Gastrocnemius medialis (tissue), 4 donors: ENCODE measurements at regions of chr10 and their contacts with region 1.

Region 1: GRCh38 chr10:6401562-6402348 is 178.3 kb downstream of the PRKCQ start:
- DNase-seq: peak; percentile 68 to 78
- ATAC-seq: peak; percentile 95 to 96
- H3K4me3 ChIP-seq: peak overlapping the region; percentile 31 to 53 (median 49)
- H3K27ac ChIP-seq: peak overlapping the region; percentile 73 to 84 (median 76)
- H3K4me1 ChIP-seq: peaks cover 9 to 18% of the 10 kb centered on the region in 2 donors
- H3K27me3 ChIP-seq: no peaks in the 10 kb centered on the region
- CTCF ChIP-seq: peak; percentile 62 to 79 (median 76)
- POLR2A ChIP-seq: no peak

Region 2: GRCh38 chr10:6088721-6089390 is 312.9 kb before region 1 on chr10 and contains the start of gene RBM17:
- in situ Hi-C with region 1: no loop called
- intact Hi-C with region 1: loop called (anchors 1 kb)
- DNase-seq: peak; percentile 92 to 96
- ATAC-seq: peak; percentile 86 to 91
- H3K4me3 ChIP-seq: peak within 1 kb of the TSS; percentile 83 to 94 (median 88)
- H3K27ac ChIP-seq: peak within 1 kb of the TSS; percentile 78 to 96 (median 82)
- H3K4me1 ChIP-seq: peaks cover 39 to 48% of the 10 kb centered on the region in 2 donors
- H3K27me3 ChIP-seq: peaks cover 0 to 5% (median 0%) of the 10 kb centered on the region in 3 donors
- CTCF ChIP-seq: peak; percentile 99 to 100 (median 100)
- POLR2A ChIP-seq: peak; percentile 83 to 87
- total RNA-seq, gene RBM17: 53.2 to 67.4 (median 60.1) TPM

Region 3: GRCh38 chr10:6114805-6115341 is 286.9 kb before region 1 on chr10:
- in situ Hi-C with region 1: loop called in 1 of 4 experiments (anchors 5 kb)
- intact Hi-C with region 1: no loop called
- DNase-seq: peak in 1 of 2 donors; percentile 49
- ATAC-seq: peak; percentile 15 to 24
- H3K4me3 ChIP-seq: no peak overlapping the region
- H3K27ac ChIP-seq: peak overlapping the region; percentile 78 to 83 (median 80)
- H3K4me1 ChIP-seq: peaks cover 48 to 49% of the 10 kb centered on the region in 2 donors
- H3K27me3 ChIP-seq: no peaks in the 10 kb centered on the region
- CTCF ChIP-seq: no peak
- POLR2A ChIP-seq: no peak

Region 4: DNA sequence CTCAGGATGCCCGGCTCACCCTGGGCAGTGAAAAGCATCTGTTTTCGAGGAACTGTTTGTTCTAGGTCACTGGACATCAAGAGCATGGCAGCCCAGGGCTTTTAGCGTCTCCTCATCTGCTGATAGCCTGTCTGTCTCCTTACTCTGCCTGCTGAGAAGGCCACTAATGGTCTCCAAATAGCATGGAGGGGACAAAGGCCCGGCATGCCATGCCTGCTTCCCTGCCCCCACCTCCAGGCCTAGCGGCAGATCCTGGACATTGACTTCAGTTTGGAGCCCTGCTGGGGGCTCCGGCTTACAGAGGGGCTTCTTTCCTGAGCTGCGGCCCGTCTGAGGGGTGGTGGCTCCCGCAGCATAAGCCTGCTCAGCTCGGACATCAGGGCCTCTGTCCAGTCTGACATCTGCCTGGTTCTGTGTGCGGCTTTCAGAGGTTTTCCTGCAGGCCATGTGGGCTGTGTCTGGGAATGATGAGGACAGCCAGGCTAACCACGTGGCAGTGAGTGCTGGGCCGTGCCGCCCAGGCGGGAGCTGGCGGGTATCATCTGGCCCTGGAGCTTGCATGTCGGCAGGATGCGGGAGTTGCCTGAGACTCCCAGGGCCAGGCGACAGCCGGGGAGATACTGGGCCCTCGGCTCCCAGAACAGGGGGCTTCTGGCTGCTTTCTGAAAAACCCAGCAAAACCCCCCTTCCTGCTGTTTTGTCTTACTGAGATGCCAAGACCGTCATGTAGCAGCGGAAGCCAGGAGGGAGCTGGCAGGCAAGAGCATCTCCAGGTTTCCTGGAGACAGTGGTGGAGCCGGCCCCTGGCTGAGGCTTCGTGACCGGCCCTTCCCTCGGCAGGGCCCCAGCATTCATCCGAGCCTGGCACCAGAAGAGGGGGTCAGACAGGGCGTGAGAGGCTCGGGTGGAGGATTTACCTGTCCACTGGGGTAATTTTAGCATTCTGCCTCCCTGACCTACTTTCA is 189.8 kb before region 1 on chr10:
- in situ Hi-C with region 1: loop called in 1 of 4 experiments (anchors 10 kb)
- intact Hi-C with region 1: no loop called
- DNase-seq: peak; percentile 53 to 56
- ATAC-seq: peak; percentile 57 to 72
- H3K4me3 ChIP-seq: peak overlapping the region in 1 of 4 donors; percentile 23
- H3K27ac ChIP-seq: peak overlapping the region; percentile 72 to 88 (median 77)
- H3K4me1 ChIP-seq: peaks cover 7 to 60% of the 10 kb centered on the region in 2 donors
- H3K27me3 ChIP-seq: no peaks in the 10 kb centered on the region
- CTCF ChIP-seq: no peak
- POLR2A ChIP-seq: no peak

Region 5: GRCh38 chr10:6321880-6322279 is 79.9 kb before region 1 on chr10:
- in situ Hi-C with region 1: no loop called
- intact Hi-C with region 1: no loop called
- DNase-seq: no peak
- ATAC-seq: no peak
- H3K4me3 ChIP-seq: no peak overlapping the region
- H3K27ac ChIP-seq: no peak overlapping the region
- H3K4me1 ChIP-seq: no peaks in the 10 kb centered on the region
- H3K27me3 ChIP-seq: no peaks in the 10 kb centered on the region
- CTCF ChIP-seq: no peak
- POLR2A ChIP-seq: no peak